Heart right ventricle (tissue), 16 donors: ENCODE measurements at regions of chr17 and their contacts with region 1.

Region 1: GRCh38 chr17:75393523-75394331 is 11.8 kb downstream of the GRB2 start:
- DNase-seq: peak; percentile 99
- ATAC-seq: peak; percentile 99 to 100 (median 100)
- H3K4me3 ChIP-seq: peak overlapping the region; percentile 40 to 68 (median 61)
- H3K27ac ChIP-seq: peak overlapping the region; percentile 30 to 89 (median 82)
- H3K4me1 ChIP-seq: peaks cover 4 to 94% (median 63%) of the 10 kb centered on the region in 9 donors
- H3K27me3 ChIP-seq: no peaks in the 10 kb centered on the region
- CTCF ChIP-seq: peak in 3 of 9 donors; percentile 6 to 29 (median 14)

Region 2: GRCh38 chr17:75225016-75225415 is 168.7 kb before region 1 on chr17:
- intact Hi-C with region 1: no loop called
- DNase-seq: no peak
- ATAC-seq: no peak
- H3K4me3 ChIP-seq: no peak overlapping the region
- H3K27ac ChIP-seq: no peak overlapping the region
- H3K4me1 ChIP-seq: peaks cover 0 to 15% (median 0%) of the 10 kb centered on the region in 9 donors
- H3K27me3 ChIP-seq: no peaks in the 10 kb centered on the region
- CTCF ChIP-seq: no peak

Region 3: GRCh38 chr17:75319904-75320691 is 73.6 kb before region 1 on chr17:
- intact Hi-C with region 1: loop called in 2 of 10 experiments (anchors 5 kb)
- DNase-seq: no peak
- ATAC-seq: no peak
- H3K4me3 ChIP-seq: no peak overlapping the region
- H3K27ac ChIP-seq: no peak overlapping the region
- H3K4me1 ChIP-seq: peaks cover 0 to 60% (median 6%) of the 10 kb centered on the region in 9 donors
- H3K27me3 ChIP-seq: no peaks in the 10 kb centered on the region
- CTCF ChIP-seq: no peak

Region 4: GRCh38 chr17:75325827-75326225 is 67.9 kb before region 1 on chr17:
- intact Hi-C with region 1: loop called in 2 of 10 experiments (anchors 5 kb)
- DNase-seq: no peak
- ATAC-seq: peak in 7 of 8 donors; percentile 27 to 61 (median 49)
- H3K4me3 ChIP-seq: no peak overlapping the region
- H3K27ac ChIP-seq: peak overlapping the region in 9 of 10 donors; percentile 22 to 83 (median 57)
- H3K4me1 ChIP-seq: peaks cover 9 to 57% (median 26%) of the 10 kb centered on the region in 9 donors
- H3K27me3 ChIP-seq: no peaks in the 10 kb centered on the region
- CTCF ChIP-seq: peak in 1 of 9 donors; percentile 8